Activated CD4-positive, alpha-beta T cell treated with anti-CD3 and anti-CD28 coated beads for 36 hours (primary cell): ENCODE measurements at regions of chr9 and their contacts with region 1.

Region 1: DNA sequence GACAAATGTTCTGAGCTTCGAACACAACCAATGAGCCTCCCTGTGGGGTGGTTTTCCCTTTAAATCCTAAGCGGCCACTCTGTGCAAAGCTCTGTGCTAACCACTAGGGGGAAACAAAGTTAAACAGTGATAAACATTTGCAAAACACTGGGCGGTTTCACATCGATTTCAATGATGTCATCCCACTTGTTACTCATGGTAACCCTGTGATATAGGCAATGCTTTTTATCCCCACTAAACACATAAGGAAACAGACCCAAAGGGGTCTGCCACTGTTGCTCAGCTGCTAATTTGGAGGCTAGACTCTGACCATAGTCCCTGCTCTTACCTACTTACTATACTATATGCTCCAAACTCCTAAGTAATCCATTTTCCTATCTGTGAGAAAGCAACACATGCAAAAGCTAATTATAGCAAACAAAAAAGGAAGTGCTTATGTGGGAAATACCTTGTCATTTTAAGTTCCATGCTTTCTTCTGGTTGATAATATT is 57.3 kb downstream of the PTPN3 start:
- DNase-seq: peak; percentile 74
- ATAC-seq: peak; percentile 99
- H3K4me3 Mint-ChIP-seq: no peak overlapping the region
- H3K27ac Mint-ChIP-seq: no peak overlapping the region
- H3K4me1 Mint-ChIP-seq: peaks cover 15% of the 10 kb centered on the region
- H3K27me3 Mint-ChIP-seq: peaks cover 13% of the 10 kb centered on the region

Region 2: GRCh38 chr9:109426626-109427402 is 14.0 kb before region 1 on chr9:
- CTCF ChIA-PET with region 1: interaction called, 15 read pairs
- POLR2A ChIA-PET with region 1: no interaction called
- intact Hi-C with region 1: no loop called
- DNase-seq: no peak
- ATAC-seq: no peak
- H3K4me3 Mint-ChIP-seq: no peak overlapping the region
- H3K27ac Mint-ChIP-seq: no peak overlapping the region
- H3K4me1 Mint-ChIP-seq: no peaks in the 10 kb centered on the region
- H3K27me3 Mint-ChIP-seq: peaks cover 6% of the 10 kb centered on the region

Region 3: GRCh38 chr9:109463924-109464625 is 23.2 kb after region 1 on chr9:
- CTCF ChIA-PET with region 1: interaction called, 80 read pairs
- POLR2A ChIA-PET with region 1: no interaction called
- intact Hi-C with region 1: loop called (anchors 1 kb)
- DNase-seq: peak; percentile 53
- ATAC-seq: peak; percentile 86
- H3K4me3 Mint-ChIP-seq: no peak overlapping the region
- H3K27ac Mint-ChIP-seq: no peak overlapping the region
- H3K4me1 Mint-ChIP-seq: peaks cover 15% of the 10 kb centered on the region
- H3K27me3 Mint-ChIP-seq: peaks cover 25% of the 10 kb centered on the region

Region 4: GRCh38 chr9:109520478-109521132 is 79.8 kb after region 1 on chr9:
- CTCF ChIA-PET with region 1: interaction called, 4 read pairs
- POLR2A ChIA-PET with region 1: no interaction called
- intact Hi-C with region 1: loop called (anchors 1 to 2 kb)
- DNase-seq: peak; percentile 70
- ATAC-seq: peak; percentile 82
- H3K4me3 Mint-ChIP-seq: no peak overlapping the region
- H3K27ac Mint-ChIP-seq: no peak overlapping the region
- H3K4me1 Mint-ChIP-seq: no peaks in the 10 kb centered on the region
- H3K27me3 Mint-ChIP-seq: peaks cover 9% of the 10 kb centered on the region